PC-9 (cell line): ENCODE measurements at regions of chr19 and their contacts with region 1.

Region 1: GRCh38 chr19:48784540-48784939 is 26.3 kb downstream of the BCAT2 start:
- DNase-seq: peak in 1 of 2 experiments; percentile 44
- H3K4me3 ChIP-seq: no peak overlapping the region
- H3K27ac ChIP-seq: no peak overlapping the region
- H3K4me1 ChIP-seq: peaks cover 11% of the 10 kb centered on the region
- H3K27me3 ChIP-seq: no peaks in the 10 kb centered on the region
- CTCF ChIP-seq: peak; percentile 47

Region 2: DNA sequence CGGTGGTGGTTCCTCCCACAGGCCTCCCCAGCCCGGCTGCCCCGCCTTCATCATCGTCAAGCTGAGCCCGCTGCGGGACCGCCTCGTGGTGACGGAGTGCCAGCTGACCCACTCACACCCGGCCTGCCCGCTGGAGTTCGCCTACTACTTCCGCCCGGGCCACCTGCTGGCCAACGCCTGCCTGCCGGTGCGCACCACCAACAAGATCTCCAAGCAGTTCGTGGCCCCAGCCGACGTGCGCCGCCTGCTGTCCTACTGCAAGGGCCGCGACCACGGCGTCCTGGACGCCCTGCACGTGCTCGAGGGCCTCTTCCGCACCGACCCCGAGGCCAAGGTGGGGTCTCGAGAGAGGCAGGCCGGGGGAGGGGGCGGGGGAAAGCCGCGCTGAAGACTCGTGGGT is 602.1 kb before region 1 on chr19:
- CTCF ChIA-PET with region 1: no interaction called
- POLR2A ChIA-PET with region 1: no interaction called
- intact Hi-C with region 1: no loop called
- DNase-seq: no peak
- H3K4me3 ChIP-seq: no peak overlapping the region
- H3K27ac ChIP-seq: no peak overlapping the region
- H3K4me1 ChIP-seq: no peaks in the 10 kb centered on the region
- H3K27me3 ChIP-seq: no peaks in the 10 kb centered on the region
- CTCF ChIP-seq: no peak

Region 3: DNA sequence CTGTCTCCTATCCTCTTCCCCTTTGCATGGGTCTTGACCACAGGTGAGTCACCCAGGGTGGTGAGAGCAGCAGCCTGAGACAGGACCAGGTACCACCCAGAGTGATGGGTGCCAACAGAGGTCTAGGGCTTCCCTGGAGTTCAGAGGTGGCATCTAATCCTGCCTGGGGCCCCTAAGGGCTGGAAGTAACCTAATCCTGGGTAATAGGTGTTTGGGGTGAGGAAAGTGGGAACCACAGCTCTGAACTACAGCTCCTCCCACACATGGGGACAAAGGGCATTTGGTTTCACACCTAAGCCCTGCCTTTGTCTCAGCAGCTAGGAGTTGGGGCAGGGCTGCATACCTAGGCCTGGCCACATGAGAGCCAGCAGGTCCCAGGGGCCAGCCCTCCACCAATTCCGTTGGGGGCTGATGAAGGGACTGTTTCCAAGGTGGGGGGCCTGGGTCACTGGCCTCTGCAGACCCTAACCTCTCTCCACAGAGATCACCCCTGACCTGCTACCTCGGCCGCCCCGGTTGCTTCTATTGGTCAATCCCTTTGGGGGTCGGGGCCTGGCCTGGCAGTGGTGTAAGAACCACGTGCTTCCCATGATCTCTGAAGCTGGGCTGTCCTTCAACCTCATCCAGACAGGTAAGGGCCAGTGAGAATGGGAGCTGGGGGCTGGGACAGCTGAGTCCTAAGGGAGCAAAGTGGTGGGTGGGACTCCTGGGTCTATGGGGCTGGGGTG is 157.2 kb before region 1 on chr19:
- CTCF ChIA-PET with region 1: no interaction called
- POLR2A ChIA-PET with region 1: interaction called, 12 read pairs
- intact Hi-C with region 1: no loop called
- DNase-seq: peak; percentile 83 to 92
- H3K4me3 ChIP-seq: no peak overlapping the region
- H3K27ac ChIP-seq: peak overlapping the region; percentile 81
- H3K4me1 ChIP-seq: peaks cover 25% of the 10 kb centered on the region
- H3K27me3 ChIP-seq: no peaks in the 10 kb centered on the region
- CTCF ChIP-seq: no peak

Region 4: GRCh38 chr19:48646001-48646721 is 138.4 kb before region 1 on chr19 and contains the start of gene CA11:
- CTCF ChIA-PET with region 1: interaction called, 7 read pairs
- POLR2A ChIA-PET with region 1: no interaction called
- intact Hi-C with region 1: loop called (anchors 1 kb)
- DNase-seq: peak; percentile 66 to 90
- H3K4me3 ChIP-seq: peak within 1 kb of the TSS; percentile 69
- H3K27ac ChIP-seq: no peak within 1 kb of the TSS
- H3K4me1 ChIP-seq: peaks cover 23% of the 10 kb centered on the region
- H3K27me3 ChIP-seq: no peaks in the 10 kb centered on the region
- CTCF ChIP-seq: peak; percentile 97
- total RNA-seq, gene CA11: 11.0 and 12.2 TPM in 2 replicates

Region 5: DNA sequence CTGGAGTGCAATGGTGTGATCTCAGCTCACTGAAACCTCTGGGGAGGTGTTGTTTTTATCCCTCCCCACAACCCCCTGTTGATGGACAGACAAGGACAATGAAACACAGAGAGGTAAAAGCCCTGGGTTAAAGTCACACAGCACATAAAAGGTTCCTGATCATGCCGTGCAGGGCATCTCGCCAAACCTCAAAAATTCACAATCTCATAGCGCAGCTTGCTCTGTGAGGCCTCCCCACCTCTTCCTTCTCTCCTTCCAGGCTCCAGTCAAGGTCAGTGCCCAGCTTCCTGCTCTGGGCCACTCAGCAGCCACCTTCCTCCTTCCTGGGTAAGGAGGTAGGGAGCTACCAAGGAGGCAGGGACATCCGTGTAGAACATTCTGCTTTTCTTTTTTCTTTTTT is 86.5 kb before region 1 on chr19:
- CTCF ChIA-PET with region 1: no interaction called
- POLR2A ChIA-PET with region 1: no interaction called
- intact Hi-C with region 1: no loop called
- DNase-seq: peak in 1 of 2 experiments; percentile 58
- H3K4me3 ChIP-seq: no peak overlapping the region
- H3K27ac ChIP-seq: no peak overlapping the region
- H3K4me1 ChIP-seq: peaks cover 24% of the 10 kb centered on the region
- H3K27me3 ChIP-seq: no peaks in the 10 kb centered on the region
- CTCF ChIP-seq: no peak

Region 6: GRCh38 chr19:48812094-48812929 is 27.8 kb after region 1 on chr19:
- CTCF ChIA-PET with region 1: interaction called, 12 read pairs
- POLR2A ChIA-PET with region 1: no interaction called
- intact Hi-C with region 1: no loop called
- DNase-seq: peak; percentile 70 to 87
- H3K4me3 ChIP-seq: peak overlapping the region; percentile 88
- H3K27ac ChIP-seq: no peak overlapping the region
- H3K4me1 ChIP-seq: 0 out of 2 replicates have a peak, but pooled peaks cover 14% of the 10 kb centered on the region
- H3K27me3 ChIP-seq: no peaks in the 10 kb centered on the region
- CTCF ChIP-seq: no peak

Region 7: GRCh38 chr19:48842789-48843162 is 58.2 kb after region 1 on chr19:
- CTCF ChIA-PET with region 1: interaction called, 11 read pairs
- POLR2A ChIA-PET with region 1: no interaction called
- intact Hi-C with region 1: loop called (anchors 1 kb)
- DNase-seq: peak; percentile 36 to 50
- H3K4me3 ChIP-seq: no peak overlapping the region
- H3K27ac ChIP-seq: no peak overlapping the region
- H3K4me1 ChIP-seq: no peaks in the 10 kb centered on the region
- H3K27me3 ChIP-seq: no peaks in the 10 kb centered on the region
- CTCF ChIP-seq: peak; percentile 95

Region 8: DNA sequence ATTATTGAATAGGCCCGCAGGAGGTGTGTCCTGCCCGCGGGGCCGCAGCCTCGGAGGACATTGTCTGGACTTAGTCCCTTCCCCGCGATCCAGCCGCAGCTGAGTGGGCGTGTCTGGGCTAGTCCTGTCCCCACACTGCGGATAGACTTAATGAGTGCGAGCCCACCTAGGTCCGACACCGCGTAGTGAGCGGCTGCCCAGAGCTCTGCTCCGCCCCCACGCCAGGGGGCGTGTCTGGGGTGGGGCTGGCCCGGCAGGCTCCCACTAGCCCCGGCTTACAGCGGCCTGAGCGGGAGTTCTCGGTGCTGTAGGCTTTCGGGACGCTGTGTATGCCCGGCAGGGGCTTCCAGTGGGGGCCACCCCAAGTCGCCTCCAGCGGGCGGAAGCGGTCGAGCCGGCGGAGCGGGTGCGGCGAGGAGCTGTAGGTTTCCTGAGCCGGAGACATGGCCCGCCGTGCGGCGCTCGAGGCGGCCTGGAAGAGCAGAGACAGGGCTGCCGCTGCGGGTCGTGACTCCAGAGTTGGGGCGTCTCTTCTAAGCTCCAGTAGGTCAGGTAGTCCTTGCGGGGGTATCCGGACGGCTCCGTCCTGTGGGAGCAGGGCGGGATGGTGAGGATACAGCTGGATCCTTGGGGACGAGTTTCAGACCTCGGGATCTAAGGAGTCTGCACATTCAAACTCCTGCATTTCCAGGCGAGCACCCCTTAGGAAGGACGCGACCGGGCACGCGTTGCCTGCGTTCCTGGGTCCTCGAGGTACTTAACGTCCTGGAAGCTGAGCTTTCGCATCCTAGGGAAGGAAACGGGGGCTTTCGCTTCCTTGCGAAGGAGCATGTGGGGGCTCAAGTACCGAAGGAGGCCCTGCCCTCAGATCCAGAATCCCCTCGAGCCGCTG is 271.7 kb after region 1 on chr19:
- CTCF ChIA-PET with region 1: no interaction called
- POLR2A ChIA-PET with region 1: interaction called, 14 read pairs
- intact Hi-C with region 1: no loop called
- DNase-seq: peak; percentile 54 to 77
- H3K4me3 ChIP-seq: peak overlapping the region; percentile 63
- H3K27ac ChIP-seq: no peak overlapping the region
- H3K4me1 ChIP-seq: 0 out of 2 replicates have a peak, but pooled peaks cover 10% of the 10 kb centered on the region
- H3K27me3 ChIP-seq: no peaks in the 10 kb centered on the region
- CTCF ChIP-seq: peak; percentile 78

Region 9: DNA sequence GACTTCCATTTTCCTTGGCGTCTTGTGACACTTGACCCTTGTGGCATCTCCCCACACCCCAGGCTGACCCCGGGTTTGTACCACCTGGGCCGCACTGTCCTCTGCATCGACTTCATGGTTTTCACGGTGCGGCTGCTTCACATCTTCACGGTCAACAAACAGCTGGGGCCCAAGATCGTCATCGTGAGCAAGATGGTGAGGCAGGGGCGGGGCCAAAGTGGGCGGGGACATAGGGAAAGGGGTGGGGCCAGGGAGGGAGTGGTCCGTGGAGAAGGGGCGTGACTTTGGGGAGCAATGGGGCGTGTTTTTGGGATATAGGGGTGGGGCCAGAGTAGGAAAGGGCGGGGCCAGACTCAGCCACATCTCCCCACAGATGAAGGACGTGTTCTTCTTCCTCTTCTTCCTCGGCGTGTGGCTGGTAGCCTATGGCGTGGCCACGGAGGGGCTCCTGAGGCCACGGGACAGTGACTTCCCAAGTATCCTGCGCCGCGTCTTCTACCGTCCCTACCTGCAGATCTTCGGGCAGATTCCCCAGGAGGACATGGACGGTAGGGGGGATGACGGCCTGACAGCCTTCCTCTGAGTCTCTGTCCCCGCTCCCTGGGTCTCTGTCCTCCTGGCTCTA is 415.8 kb after region 1 on chr19:
- CTCF ChIA-PET with region 1: interaction called, 16 read pairs
- POLR2A ChIA-PET with region 1: no interaction called
- intact Hi-C with region 1: no loop called
- DNase-seq: no peak
- H3K4me3 ChIP-seq: no peak overlapping the region
- H3K27ac ChIP-seq: no peak overlapping the region
- H3K4me1 ChIP-seq: peaks cover 38% of the 10 kb centered on the region
- H3K27me3 ChIP-seq: no peaks in the 10 kb centered on the region
- CTCF ChIP-seq: no peak